MCF 10A (cell line): ENCODE measurements at regions of chr9 and their contacts with region 1.

Region 1: GRCh38 chr9:109182940-109183798 is 16.1 kb upstream of the FRRS1L start:
- DNase-seq: peak; percentile 65
- H3K4me3 Mint-ChIP-seq: no peak overlapping the region
- H3K27ac Mint-ChIP-seq: no peak overlapping the region
- H3K4me1 Mint-ChIP-seq: no peaks in the 10 kb centered on the region
- H3K27me3 Mint-ChIP-seq: no peaks in the 10 kb centered on the region
- CTCF ChIP-seq: peak; percentile 5

Region 2: DNA sequence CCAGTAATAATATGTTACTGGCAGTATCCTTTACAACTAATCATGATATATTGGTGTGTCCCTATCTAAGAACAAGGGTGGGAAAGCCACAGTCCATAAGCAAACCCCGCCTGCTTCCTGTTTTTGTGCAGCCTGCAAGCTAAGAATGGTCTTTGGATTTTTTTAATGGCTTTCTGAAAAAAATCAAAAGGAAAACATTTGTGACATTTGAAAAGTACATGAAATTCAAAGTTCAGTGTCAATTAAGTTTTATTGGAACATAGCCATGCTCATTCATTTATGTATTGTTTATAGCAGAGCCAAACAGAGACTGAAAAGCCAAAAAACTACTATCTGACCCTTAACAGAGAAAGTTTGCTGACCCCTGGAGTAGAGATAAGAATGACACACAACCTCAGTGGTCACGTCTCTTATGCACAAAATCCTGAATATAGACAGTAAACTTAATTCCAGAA is 50.6 kb before region 1 on chr9:
- CTCF ChIA-PET with region 1: no interaction called
- POLR2A ChIA-PET with region 1: no interaction called
- intact Hi-C with region 1: no loop called
- DNase-seq: no peak
- H3K4me3 Mint-ChIP-seq: no peak overlapping the region
- H3K27ac Mint-ChIP-seq: no peak overlapping the region
- H3K4me1 Mint-ChIP-seq: no peaks in the 10 kb centered on the region
- H3K27me3 Mint-ChIP-seq: no peaks in the 10 kb centered on the region
- CTCF ChIP-seq: no peak

Region 3: GRCh38 chr9:109198736-109199379 is 15.7 kb after region 1 on chr9:
- CTCF ChIA-PET with region 1: interaction called, 31 read pairs
- POLR2A ChIA-PET with region 1: no interaction called
- intact Hi-C with region 1: no loop called
- DNase-seq: peak; percentile 13
- H3K4me3 Mint-ChIP-seq: no peak overlapping the region
- H3K27ac Mint-ChIP-seq: no peak overlapping the region
- H3K4me1 Mint-ChIP-seq: no peaks in the 10 kb centered on the region
- H3K27me3 Mint-ChIP-seq: no peaks in the 10 kb centered on the region
- CTCF ChIP-seq: no peak

Region 4: GRCh38 chr9:109206670-109207069 is 23.5 kb after region 1 on chr9:
- CTCF ChIA-PET with region 1: interaction called, 11 read pairs
- POLR2A ChIA-PET with region 1: no interaction called
- intact Hi-C with region 1: no loop called
- DNase-seq: no peak
- H3K4me3 Mint-ChIP-seq: no peak overlapping the region
- H3K27ac Mint-ChIP-seq: no peak overlapping the region
- H3K4me1 Mint-ChIP-seq: no peaks in the 10 kb centered on the region
- H3K27me3 Mint-ChIP-seq: no peaks in the 10 kb centered on the region
- CTCF ChIP-seq: no peak

Region 5: DNA sequence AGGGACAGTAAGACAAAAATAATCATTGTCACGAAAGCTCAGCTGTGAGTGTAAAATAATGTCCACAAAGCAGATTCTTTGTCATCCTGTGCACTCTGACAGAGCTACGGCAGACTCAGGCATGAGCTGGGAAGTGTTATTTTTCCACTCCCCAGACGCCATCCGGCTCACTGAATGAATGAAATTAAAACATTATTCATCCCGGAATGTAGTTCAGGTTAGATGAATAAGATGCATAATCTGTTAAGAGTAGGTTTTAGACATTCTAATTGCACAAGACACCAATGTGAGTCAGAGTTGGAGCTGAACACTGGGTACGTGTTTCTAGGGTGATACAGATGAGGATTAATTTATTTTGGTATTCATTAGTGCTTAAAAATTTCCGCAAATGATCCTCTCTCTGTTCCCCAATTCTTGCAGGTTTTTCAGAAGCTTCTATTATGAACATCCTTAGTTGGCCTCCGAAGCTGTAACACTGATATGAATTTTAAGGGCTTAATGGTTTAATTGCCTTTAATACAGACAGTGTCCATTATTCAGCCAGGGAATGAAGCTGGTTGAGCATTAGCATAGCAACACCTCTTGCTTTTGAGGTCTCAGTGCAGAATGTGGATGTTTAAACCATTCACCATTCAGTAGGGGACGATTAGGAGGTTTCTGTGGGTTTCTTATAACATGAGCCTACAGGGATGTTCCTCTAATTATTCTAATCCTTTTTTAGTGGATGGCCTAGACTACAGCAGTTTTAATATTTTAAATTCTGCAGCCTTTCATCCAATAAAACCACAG is 49.5 kb after region 1 on chr9:
- CTCF ChIA-PET with region 1: interaction called, 11 read pairs
- POLR2A ChIA-PET with region 1: interaction called, 3 read pairs
- intact Hi-C with region 1: loop called (anchors 5 kb)
- DNase-seq: peak; percentile 83
- H3K4me3 Mint-ChIP-seq: peak overlapping the region; percentile 18
- H3K27ac Mint-ChIP-seq: peak overlapping the region; percentile 71
- H3K4me1 Mint-ChIP-seq: peaks cover 19% of the 10 kb centered on the region
- H3K27me3 Mint-ChIP-seq: no peaks in the 10 kb centered on the region
- CTCF ChIP-seq: no peak

Region 6: DNA sequence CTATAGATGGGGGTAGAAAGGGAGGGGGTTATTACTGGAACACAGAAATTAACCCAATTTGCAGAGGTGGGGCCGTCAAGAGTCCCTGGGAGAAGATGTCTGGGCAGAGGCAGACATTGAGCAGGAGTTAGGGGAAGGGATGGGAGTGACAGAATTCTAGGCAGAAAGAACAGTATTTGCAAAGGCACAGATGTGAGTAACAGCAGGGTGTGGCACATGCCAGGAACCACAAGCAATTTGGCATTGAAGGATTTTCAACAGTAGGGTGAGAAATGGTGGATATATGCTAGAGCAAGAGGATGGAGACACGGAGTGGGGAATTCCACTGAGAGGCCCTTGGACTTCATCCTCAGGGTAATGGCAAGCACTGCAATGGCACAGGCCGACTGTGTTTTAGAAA is 55.5 kb after region 1 on chr9:
- CTCF ChIA-PET with region 1: interaction called, 11 read pairs
- POLR2A ChIA-PET with region 1: no interaction called
- intact Hi-C with region 1: loop called (anchors 5 kb)
- DNase-seq: peak; percentile 72
- H3K4me3 Mint-ChIP-seq: peak overlapping the region; percentile 22
- H3K27ac Mint-ChIP-seq: peak overlapping the region; percentile 84
- H3K4me1 Mint-ChIP-seq: peaks cover 34% of the 10 kb centered on the region
- H3K27me3 Mint-ChIP-seq: no peaks in the 10 kb centered on the region
- CTCF ChIP-seq: no peak

Region 7: DNA sequence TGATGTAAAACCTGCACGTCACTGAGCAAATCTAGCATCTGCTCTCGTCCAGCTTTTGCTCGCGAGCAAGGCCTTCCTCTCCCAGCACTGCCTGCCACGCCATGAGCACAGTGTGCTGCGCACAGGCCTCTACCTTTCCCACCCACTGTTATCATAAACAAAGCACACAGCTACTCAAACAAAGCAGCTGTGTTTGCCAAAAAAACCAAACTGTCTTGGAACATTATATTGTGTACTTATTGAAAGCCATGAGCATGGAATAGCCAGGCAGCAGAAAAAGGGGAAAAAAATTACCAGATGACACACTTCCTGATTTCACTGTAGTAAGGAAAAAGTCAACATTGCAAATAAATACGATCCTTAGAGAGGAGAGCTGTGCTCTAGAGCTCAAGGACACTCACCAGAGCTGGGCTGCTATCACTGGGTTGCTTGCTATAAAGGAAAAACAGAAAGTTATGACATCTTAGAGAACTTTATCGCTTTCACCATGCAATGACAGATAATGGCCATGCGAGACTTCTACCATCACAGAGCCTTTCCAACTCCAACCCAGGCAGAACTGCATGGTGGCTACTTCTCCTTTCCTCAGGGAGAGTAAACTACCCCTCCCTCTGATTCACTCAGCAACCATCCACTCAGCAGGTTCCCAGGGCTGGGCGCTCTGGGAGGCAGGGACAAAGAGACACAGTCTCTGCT is 68.1 kb after region 1 on chr9:
- CTCF ChIA-PET with region 1: interaction called, 17 read pairs
- POLR2A ChIA-PET with region 1: no interaction called
- intact Hi-C with region 1: no loop called
- DNase-seq: peak; percentile 84
- H3K4me3 Mint-ChIP-seq: peak overlapping the region; percentile 59
- H3K27ac Mint-ChIP-seq: peak overlapping the region; percentile 96
- H3K4me1 Mint-ChIP-seq: peaks cover 50% of the 10 kb centered on the region
- H3K27me3 Mint-ChIP-seq: no peaks in the 10 kb centered on the region
- CTCF ChIP-seq: no peak

Region 8: GRCh38 chr9:109401168-109401989 is 218.2 kb after region 1 on chr9:
- CTCF ChIA-PET with region 1: interaction called, 5 read pairs
- POLR2A ChIA-PET with region 1: no interaction called
- intact Hi-C with region 1: loop called (anchors 2 kb)
- DNase-seq: peak; percentile 77
- H3K4me3 Mint-ChIP-seq: no peak overlapping the region
- H3K27ac Mint-ChIP-seq: peak overlapping the region; percentile 85
- H3K4me1 Mint-ChIP-seq: no peaks in the 10 kb centered on the region
- H3K27me3 Mint-ChIP-seq: no peaks in the 10 kb centered on the region
- CTCF ChIP-seq: peak; percentile 83